Kidney (tissue), 22 donors: ENCODE measurements at regions of chr13 and their contacts with region 1.

Region 1: DNA sequence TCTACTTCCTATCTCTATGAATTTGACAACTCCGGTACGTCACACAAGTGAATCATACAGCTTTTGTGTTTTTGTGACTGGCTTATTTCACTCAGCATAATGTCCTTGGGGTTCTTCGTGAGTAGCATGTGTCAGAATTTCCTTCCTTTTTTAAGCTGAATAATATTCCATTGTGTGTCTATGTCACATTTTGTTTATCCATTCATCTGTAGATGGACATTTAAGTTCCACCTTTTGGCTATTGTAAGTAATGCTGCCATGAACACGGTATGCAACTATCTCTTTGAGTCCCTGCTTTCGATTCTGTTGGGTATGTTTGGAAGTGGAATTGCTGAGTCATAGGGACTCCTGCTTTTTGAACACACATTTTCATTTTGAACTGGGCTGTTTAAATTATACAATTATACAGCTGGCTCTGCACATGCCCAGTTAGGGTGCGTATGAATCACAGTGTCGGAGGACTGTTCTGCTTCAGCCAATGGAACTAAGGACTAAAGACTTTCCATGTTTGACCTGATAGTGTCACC is 43.0 kb upstream of the C13orf42 start:
- DNase-seq: no peak
- H3K4me3 ChIP-seq: no peak overlapping the region
- H3K27ac ChIP-seq: no peak overlapping the region
- H3K4me1 ChIP-seq: no peaks in the 10 kb centered on the region
- H3K27me3 ChIP-seq: no peaks in the 10 kb centered on the region
- CTCF ChIP-seq: no peak

Region 2: GRCh38 chr13:50893211-50893852 is 260.8 kb before region 1 on chr13:
- intact Hi-C with region 1: no loop called
- DNase-seq: peak in 2 of 5 donors; percentile 70 to 88
- H3K4me3 ChIP-seq: no peak overlapping the region
- H3K27ac ChIP-seq: no peak overlapping the region
- H3K4me1 ChIP-seq: no peaks in the 10 kb centered on the region
- H3K27me3 ChIP-seq: no peaks in the 10 kb centered on the region
- CTCF ChIP-seq: no peak

Region 3: DNA sequence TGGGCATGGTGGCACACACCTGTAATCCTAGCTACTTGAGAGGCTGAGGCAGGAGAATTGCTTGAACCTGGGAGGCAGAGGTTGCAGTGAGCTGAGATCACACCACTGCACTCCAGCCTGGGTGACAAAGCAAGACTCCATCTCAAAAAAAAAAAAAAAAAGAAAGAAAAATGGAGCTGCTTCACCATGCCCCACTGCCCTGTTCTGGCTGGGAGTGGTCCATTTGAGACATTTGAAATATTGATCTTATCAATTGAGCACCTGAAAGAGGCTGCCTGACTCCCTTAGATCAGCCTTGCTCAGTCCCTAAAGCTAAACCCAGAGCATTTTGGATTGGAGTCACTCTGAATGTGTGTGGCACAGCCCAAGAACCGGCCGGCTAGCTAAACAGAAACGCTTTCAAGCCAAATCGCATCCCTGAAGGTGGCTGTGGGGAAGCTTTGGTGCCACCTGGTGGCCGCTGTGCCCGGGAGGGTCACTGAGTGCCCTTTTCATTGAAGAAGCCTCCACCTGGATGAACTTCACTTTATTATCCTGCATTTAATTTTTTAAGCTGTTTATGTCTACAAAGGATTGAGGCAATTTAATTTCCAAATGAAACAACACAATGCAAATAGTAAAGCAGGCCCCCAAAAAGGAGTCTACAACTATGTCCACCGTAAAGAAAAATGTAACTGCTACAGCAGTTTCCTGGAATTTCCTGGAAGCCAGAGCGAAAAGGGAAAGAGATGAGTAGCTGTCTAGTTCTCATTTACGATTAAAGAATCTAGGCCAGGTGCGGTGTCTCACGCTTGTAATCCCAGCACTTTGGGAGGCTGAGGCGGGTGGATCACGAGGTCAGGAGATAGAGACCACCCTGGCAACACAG is 132.3 kb after region 1 on chr13:
- intact Hi-C with region 1: loop called (anchors 10 kb)
- DNase-seq: peak; percentile 83 to 88 (median 86)
- H3K4me3 ChIP-seq: no peak overlapping the region
- H3K27ac ChIP-seq: no peak overlapping the region
- H3K4me1 ChIP-seq: no peaks in the 10 kb centered on the region
- H3K27me3 ChIP-seq: no peaks in the 10 kb centered on the region
- CTCF ChIP-seq: peak; percentile 95